ENCODE measurements at regions of chr1 and their contacts with region 1.

Region 1: DNA sequence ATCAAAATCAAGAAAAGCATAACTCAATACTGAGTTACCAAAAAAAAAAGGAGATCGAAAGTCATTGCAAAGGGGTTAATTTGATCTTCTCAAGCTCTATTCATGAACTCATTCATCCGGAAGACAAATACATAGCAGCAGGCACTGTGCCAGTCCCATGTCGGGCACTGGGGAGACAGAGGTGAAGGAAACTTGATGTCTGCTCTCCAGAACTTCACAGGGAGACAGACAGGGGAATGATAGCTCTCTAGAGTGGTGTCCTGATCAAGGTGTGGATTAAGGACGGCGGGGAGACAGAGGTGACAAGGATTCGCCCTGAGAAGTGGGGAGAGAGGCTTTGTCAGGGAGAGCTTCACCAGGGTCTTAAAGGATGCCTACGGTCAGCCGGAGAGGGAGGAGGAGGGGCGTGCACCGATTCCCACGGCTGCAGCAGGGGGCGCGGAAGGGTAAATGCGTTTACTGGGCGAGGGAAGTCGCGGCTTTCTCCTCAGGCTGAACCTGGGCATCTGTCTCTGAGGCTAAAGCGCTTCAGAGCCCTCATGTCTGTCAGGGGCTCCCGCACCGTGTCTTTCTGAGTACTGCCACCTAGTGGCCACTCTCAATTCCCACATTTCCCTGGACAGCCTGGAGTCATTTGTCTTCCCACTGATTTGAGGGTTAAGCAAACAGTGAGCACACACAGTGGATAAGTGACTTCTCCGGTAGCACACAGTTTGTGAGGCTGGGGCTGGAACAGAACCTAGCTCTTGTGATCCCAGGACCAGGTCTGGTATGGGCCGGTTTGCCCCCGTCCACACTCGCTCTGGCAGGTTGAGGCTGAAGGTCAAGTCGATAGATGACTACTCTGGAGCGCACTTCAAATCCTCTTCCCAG is 152.8 kb downstream of the TENT5C start:
- DNase-seq: peak; percentile 86
- H3K4me3 ChIP-seq: peak overlapping the region; percentile 15 to 39 (median 29)
- H3K27ac ChIP-seq: no peak overlapping the region
- H3K4me1 ChIP-seq: peaks cover 8% of the 10 kb centered on the region
- H3K27me3 ChIP-seq: peaks cover 10% of the 10 kb centered on the region in 2 experiments
- CTCF ChIP-seq: peak; percentile 79 to 83
- POLR2A ChIP-seq: no peak

Region 2: GRCh38 chr1:117067533-117068370 is 690.9 kb before region 1 on chr1:
- CTCF ChIA-PET with region 1: interaction called, 7 read pairs
- POLR2A ChIA-PET with region 1: no interaction called
- dilution Hi-C with region 1: no loop called
- intact Hi-C with region 1: loop called (anchors 1 kb)
- DNase-seq: peak; percentile 51
- H3K4me3 ChIP-seq: no peak overlapping the region
- H3K27ac ChIP-seq: no peak overlapping the region
- H3K4me1 ChIP-seq: no peaks in the 10 kb centered on the region
- H3K27me3 ChIP-seq: no peaks in the 10 kb centered on the region
- CTCF ChIP-seq: peak; percentile 64 to 77
- POLR2A ChIP-seq: no peak

Region 3: GRCh38 chr1:117512743-117513321 is 245.8 kb before region 1 on chr1:
- CTCF ChIA-PET with region 1: interaction called, 173 read pairs
- POLR2A ChIA-PET with region 1: interaction called, 3 read pairs
- dilution Hi-C with region 1: no loop called
- intact Hi-C with region 1: loop called (anchors 1 kb)
- DNase-seq: peak; percentile 41
- H3K4me3 ChIP-seq: no peak overlapping the region
- H3K27ac ChIP-seq: no peak overlapping the region
- H3K4me1 ChIP-seq: no peaks in the 10 kb centered on the region
- H3K27me3 ChIP-seq: no peaks in the 10 kb centered on the region
- CTCF ChIP-seq: peak; percentile 20 to 32
- POLR2A ChIP-seq: no peak

Region 4: DNA sequence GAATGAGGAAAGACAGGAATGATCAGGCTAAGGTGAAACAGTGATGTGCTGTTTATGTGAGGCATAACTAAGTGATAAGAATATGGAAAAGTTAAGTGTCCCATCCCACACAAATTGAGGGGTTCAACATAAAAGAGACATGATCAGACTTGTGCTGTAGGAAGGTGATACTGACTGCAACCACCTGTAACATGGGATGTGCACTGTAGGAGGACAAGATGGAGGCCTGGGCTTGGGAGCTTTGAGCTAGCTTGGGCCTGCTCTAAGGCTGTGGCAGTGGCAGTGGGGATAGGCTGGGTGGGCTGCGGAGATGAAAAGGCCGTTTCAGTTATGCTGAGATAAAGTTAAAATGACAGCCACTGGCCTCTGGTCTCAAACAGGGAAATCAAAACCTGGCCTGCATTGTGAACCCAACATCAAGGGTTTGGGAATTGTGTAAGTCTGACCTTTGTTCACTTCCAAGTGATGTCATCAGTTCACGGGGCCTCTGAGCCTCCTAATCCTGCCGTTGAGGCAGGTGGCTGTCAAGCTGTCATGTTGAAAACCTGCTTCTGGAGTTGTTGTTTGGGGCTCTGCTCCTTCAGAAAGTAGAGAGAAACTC is 214.1 kb before region 1 on chr1:
- CTCF ChIA-PET with region 1: interaction called, 398 read pairs
- POLR2A ChIA-PET with region 1: no interaction called
- dilution Hi-C with region 1: loop called (anchors 25 kb)
- intact Hi-C with region 1: no loop called
- DNase-seq: no peak
- H3K4me3 ChIP-seq: no peak overlapping the region
- H3K27ac ChIP-seq: no peak overlapping the region
- H3K4me1 ChIP-seq: no peaks in the 10 kb centered on the region
- H3K27me3 ChIP-seq: peaks cover 2 to 5% of the 10 kb centered on the region in 2 experiments
- CTCF ChIP-seq: no peak
- POLR2A ChIP-seq: no peak

Region 5: DNA sequence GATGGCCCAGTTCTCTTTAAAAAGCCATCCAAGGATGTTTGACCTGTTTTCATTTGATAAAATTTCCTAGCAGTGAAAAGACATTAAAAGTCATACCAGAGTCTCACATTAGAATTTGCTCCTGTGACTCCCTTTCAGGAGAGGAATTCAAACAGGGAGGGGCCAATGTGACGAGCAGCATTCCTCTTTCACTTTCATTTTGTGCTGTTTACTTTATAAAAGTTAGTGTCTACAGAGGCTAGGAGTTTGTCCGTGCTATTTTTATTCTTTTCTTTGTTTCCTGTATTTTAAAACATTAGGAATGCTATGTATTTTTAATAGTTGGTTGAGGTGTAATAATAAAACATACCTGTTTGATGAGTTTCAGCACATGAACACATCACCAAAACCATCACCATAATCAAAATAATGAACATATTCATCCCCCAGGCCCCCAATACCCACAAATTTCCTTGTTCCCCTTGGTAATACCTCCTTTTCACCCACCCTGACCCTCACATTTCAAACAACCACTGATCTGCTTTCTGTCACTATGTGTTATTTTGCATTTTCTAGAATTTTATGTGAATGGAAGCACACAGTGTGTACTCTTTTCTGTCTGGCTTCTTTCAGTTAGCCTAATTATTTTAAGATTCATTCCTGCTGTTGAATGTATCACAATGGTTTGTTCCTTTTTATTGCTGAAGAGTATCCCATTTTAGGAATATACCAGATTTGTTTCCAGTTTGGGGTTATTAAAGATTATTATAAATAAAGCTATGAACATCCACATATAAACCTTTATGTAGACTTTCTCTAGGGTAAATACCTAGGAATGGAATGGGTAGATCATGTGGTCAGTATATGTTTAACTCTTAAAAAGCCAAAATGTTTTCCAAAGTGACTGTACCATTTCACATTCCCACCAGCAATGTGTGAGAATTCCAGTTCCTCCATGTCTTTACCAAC is 23.4 kb before region 1 on chr1:
- CTCF ChIA-PET with region 1: interaction called, 51 read pairs
- POLR2A ChIA-PET with region 1: no interaction called
- dilution Hi-C with region 1: no loop called
- intact Hi-C with region 1: no loop called
- DNase-seq: peak; percentile 65
- H3K4me3 ChIP-seq: peak overlapping the region in 2 of 3 experiments; percentile 10 to 71
- H3K27ac ChIP-seq: no peak overlapping the region
- H3K4me1 ChIP-seq: peaks cover 3% of the 10 kb centered on the region
- H3K27me3 ChIP-seq: no peaks in the 10 kb centered on the region
- CTCF ChIP-seq: no peak
- POLR2A ChIP-seq: no peak

Region 6: GRCh38 chr1:117895482-117896114 is 136.9 kb after region 1 on chr1:
- CTCF ChIA-PET with region 1: interaction called, 47 read pairs
- POLR2A ChIA-PET with region 1: no interaction called
- dilution Hi-C with region 1: no loop called
- intact Hi-C with region 1: loop called (anchors 1 kb)
- DNase-seq: peak; percentile 76
- H3K4me3 ChIP-seq: no peak overlapping the region
- H3K27ac ChIP-seq: no peak overlapping the region
- H3K4me1 ChIP-seq: no peaks in the 10 kb centered on the region
- H3K27me3 ChIP-seq: no peaks in the 10 kb centered on the region
- CTCF ChIP-seq: peak; percentile 58 to 68
- POLR2A ChIP-seq: no peak

Region 7: DNA sequence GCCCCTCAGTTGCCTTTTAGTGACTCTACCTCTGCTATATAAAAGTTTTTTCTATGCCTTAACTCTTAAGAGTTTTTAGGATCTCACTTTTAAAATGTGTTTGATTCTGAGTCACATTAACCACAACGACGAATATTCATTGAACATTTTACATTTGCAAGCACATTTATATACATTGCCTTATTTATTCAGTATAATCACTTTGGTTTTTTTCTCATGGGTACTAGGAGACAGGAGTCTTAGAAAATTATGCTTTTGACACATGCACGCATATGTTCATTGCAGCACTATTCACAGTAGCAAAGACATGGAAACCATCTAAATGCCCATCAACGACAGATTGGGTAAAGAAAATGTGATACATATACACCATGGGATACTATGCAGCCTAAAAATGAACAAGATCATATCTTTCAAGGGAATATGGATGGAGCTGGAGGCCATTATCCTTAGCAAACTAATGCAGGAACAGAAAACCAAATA is 663.2 kb after region 1 on chr1:
- CTCF ChIA-PET with region 1: no interaction called
- POLR2A ChIA-PET with region 1: no interaction called
- dilution Hi-C with region 1: no loop called
- intact Hi-C with region 1: no loop called
- DNase-seq: no peak
- H3K4me3 ChIP-seq: no peak overlapping the region
- H3K27ac ChIP-seq: no peak overlapping the region
- H3K4me1 ChIP-seq: no peaks in the 10 kb centered on the region
- H3K27me3 ChIP-seq: no peaks in the 10 kb centered on the region
- CTCF ChIP-seq: no peak
- POLR2A ChIP-seq: no peak

Measured in endothelial cell of umbilical vein (primary cell).